Thyroid gland (tissue), 4 donors: ENCODE measurements at regions of chr1 and their contacts with region 1.

Region 1: GRCh38 chr1:235253219-235253962 is 74.6 kb downstream of the ARID4B start:
- DNase-seq: peak; percentile 60 to 65
- H3K4me3 ChIP-seq: no peak overlapping the region
- H3K27ac ChIP-seq: no peak overlapping the region
- H3K4me1 ChIP-seq: no peaks in the 10 kb centered on the region
- H3K27me3 ChIP-seq: no peaks in the 10 kb centered on the region
- CTCF ChIP-seq: peak; percentile 47 to 89 (median 80)
- POLR2A ChIP-seq: no peak

Region 2: DNA sequence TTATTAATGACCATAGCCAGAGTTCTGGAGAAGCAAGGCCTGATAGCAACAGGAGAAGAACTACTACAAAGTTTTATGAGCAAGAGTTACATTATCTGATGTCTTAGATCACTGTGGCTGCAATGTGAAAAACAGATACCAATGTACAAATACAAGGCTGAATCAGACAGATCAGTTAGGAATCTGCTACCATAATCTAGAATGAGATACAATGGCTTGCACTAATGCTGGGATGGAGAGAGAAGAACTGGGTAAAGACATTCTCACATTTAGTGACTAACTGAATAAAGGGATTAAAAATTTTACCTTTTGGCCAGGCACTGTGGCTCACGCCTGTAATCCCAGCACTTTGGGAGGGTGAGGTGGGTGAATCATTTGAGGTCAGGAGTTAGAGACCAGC is 33.3 kb after region 1 on chr1:
- intact Hi-C with region 1: no loop called
- DNase-seq: no peak
- H3K4me3 ChIP-seq: no peak overlapping the region
- H3K27ac ChIP-seq: no peak overlapping the region
- H3K4me1 ChIP-seq: peaks cover 6 to 14% of the 10 kb centered on the region in 2 donors
- H3K27me3 ChIP-seq: no peaks in the 10 kb centered on the region
- CTCF ChIP-seq: no peak
- POLR2A ChIP-seq: no peak

Region 3: DNA sequence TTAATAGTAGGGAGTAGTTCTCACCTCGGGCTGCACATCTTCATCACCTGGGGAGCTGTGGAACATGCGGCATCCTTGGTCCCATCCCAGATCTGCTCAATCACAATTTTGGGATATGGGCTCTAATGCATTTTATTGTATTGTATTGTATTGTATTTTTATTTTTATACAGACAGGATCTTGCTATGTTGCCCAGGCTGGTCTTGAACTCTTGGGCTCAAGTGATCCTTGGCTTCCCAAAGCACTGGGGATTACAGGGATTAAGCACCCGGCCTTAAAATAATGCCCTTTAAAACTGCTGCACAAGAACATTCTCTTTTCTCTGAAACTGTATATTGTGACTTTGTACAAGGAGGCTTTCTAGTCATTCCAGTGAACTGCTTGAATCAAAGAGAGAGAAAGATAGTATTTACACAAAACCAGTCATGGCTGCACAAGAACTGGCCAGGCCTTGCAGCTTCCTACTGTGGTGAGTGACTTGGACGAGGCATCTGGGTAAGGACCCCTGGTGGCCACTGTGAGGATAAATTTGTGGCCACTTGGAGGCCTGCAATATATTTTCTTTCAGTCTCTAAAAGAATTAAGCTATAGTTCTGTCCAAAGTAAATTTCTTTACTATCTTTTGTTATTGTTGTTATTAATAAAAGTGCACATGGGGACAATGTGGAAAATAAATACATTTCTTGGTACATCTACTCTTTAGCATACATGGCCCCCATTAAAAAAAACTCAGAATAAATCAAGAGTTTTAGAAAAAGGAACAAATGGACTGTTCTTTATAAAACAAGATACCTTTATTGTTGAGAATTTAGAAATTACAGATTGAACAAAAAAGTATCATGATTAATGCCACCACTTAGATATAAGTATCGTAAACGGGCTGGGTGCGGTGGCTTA is 161.9 kb after region 1 on chr1:
- intact Hi-C with region 1: loop called (anchors 5 kb)
- DNase-seq: peak; percentile 82 to 88
- H3K4me3 ChIP-seq: no peak overlapping the region
- H3K27ac ChIP-seq: peak overlapping the region; percentile 31 to 54 (median 37)
- H3K4me1 ChIP-seq: peaks cover 12 to 26% of the 10 kb centered on the region in 2 donors
- H3K27me3 ChIP-seq: no peaks in the 10 kb centered on the region
- CTCF ChIP-seq: peak; percentile 64 to 88 (median 84)
- POLR2A ChIP-seq: no peak